ENCODE measurements at regions of chr16 and their contacts with region 1.

Region 1: GRCh38 chr16:68031951-68032350 is 8.9 kb downstream of the DUS2 start:
- DNase-seq: no peak
- ATAC-seq: no peak
- H3K4me3 ChIP-seq: no peak overlapping the region
- H3K27ac ChIP-seq: no peak overlapping the region
- H3K4me1 ChIP-seq: peaks cover 4 to 10% of the 10 kb centered on the region in 2 donors
- H3K27me3 ChIP-seq: no peaks in the 10 kb centered on the region
- CTCF ChIP-seq: no peak
- POLR2A ChIP-seq: no peak

Region 2: DNA sequence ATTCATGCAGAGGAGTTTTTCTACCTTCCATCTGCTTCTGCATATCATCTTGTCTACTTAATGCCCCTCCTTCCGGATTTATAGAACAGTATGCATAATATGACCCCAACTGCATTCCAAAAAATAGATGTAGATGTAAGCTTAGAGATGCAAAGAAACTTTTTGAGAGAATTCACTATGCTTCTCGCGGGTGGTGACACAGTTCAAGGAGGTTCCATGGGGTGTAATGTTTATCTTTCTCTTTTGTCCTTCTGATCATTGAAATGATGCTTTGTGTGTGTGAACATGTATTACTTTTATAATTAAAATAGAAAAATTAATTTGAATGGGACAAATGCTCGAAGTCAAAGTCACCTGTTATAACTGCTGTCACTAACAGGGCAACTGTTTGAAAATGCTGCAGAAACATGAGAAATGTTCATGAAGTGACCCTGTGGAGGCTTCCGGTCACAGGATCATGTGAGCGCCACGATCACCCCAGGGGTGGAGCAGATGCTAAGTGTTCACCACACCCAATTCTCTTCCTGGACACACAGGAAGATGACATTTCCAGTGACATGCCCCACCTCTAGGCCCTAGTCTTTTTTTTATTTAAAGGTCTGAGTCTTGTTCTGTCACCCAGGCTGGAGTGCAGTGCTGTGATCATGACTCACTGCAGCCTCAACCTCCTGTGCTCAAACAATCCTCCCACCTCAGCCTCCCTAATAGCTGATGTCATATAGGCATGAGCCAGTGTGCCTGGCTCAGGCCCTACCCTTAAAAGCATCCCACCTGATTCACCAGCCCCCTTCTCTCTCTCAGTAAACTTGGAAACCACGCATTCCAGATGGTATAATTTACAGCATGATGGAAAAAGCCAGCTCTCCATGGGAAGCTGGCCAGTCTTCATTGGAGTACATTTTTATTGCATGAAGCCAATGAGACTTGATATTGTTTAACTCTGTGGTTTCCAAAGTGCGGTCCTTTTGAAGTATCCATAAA is 527.6 kb before region 1 on chr16:
- in situ Hi-C with region 1: no loop called
- intact Hi-C with region 1: loop called (anchors 5 kb)
- DNase-seq: peak in 1 of 2 donors; percentile 62
- ATAC-seq: peak; percentile 61 to 66
- H3K4me3 ChIP-seq: no peak overlapping the region
- H3K27ac ChIP-seq: peak overlapping the region; percentile 49 to 69 (median 54)
- H3K4me1 ChIP-seq: peaks cover 0 to 4% of the 10 kb centered on the region in 2 donors
- H3K27me3 ChIP-seq: no peaks in the 10 kb centered on the region
- CTCF ChIP-seq: no peak
- POLR2A ChIP-seq: no peak

Region 3: GRCh38 chr16:68128577-68129305 is 96.8 kb after region 1 on chr16:
- in situ Hi-C with region 1: no loop called
- intact Hi-C with region 1: no loop called
- DNase-seq: peak; percentile 18 to 23
- ATAC-seq: peak; percentile 79 to 89
- H3K4me3 ChIP-seq: no peak overlapping the region
- H3K27ac ChIP-seq: peak overlapping the region; percentile 74 to 86 (median 82)
- H3K4me1 ChIP-seq: peaks cover 46 to 49% of the 10 kb centered on the region in 2 donors
- H3K27me3 ChIP-seq: no peaks in the 10 kb centered on the region
- CTCF ChIP-seq: no peak
- POLR2A ChIP-seq: no peak

Measured in gastrocnemius medialis (tissue), 4 donors.